Ascending aorta (tissue), 2 donors: ENCODE measurements at regions of chr1 and their contacts with region 1.

Region 1: DNA sequence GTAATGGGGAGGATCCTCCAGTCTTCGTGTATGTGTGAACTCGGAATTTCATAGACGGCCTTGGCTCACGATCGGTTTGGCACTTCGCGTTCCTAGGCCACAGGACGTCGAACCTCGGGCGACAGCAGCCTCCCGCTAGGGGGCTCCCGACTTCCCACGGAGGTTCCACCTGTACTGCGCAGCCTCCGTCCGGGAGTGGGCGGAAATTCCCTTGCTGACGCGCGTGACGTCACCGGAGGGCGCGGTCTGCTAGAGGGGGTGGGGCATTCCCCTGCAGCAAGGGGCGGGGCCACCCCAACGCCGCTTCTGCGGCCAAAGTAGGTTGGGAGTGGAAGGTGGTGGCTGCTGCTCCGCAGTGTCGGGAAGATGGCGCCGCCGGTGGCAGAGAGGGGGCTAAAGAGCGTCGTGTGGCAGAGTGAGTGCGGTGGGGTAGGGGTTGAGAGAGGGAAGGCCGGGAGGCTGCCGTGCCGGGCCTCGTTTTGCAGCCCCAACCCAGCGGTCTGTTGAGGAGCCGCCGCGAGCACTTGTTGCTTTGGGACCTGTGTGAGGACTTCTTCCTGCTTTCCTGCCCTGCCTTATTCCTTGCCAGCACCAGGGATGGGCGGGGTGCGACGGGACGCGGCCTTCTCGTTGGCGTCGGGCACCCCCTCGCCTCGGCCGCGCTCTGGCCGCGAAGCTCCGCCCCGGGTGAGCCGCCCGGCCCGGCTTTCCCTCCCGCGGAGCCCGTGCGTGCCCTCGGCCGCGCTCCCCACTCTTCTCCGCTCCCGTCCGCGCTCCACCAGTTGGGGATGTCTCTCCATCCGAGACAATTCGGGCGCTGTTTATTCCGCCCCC is at the start of gene STXBP3:
- DNase-seq: peak; percentile 92 to 99
- H3K4me3 ChIP-seq: peak within 1 kb of the TSS; percentile 71 to 89
- H3K27ac ChIP-seq: peak within 1 kb of the TSS; percentile 96 to 97
- H3K4me1 ChIP-seq: peaks cover 0 to 8% of the 10 kb centered on the region in 2 donors
- H3K27me3 ChIP-seq: no peaks in the 10 kb centered on the region
- CTCF ChIP-seq: peak; percentile 84 to 97 (median 94)
- total RNA-seq, gene STXBP3: 13.7 TPM

Region 2: DNA sequence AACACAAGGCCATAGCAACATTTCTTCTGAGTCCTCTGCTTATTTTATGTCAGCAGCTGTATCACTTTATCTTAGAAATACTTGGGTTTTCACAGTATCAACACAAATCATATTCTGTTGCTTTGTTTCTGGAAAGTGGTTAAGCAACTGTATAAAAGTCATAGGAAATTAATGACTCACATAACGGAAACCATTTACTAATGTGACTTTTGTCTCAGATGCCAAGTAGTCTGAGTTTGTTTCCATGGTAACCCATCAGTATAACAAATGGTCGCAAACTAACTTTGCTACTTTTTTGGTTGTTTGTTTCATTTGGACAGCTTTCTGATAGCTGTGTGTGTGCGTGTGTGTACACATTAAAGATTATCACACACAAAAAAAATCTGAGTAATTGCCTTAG is 155.6 kb before region 1 on chr1:
- intact Hi-C with region 1: loop called (anchors 2 kb)
- DNase-seq: no peak
- H3K4me3 ChIP-seq: no peak overlapping the region
- H3K27ac ChIP-seq: peak overlapping the region; percentile 72 to 87
- H3K4me1 ChIP-seq: peaks cover 3 to 35% of the 10 kb centered on the region in 2 donors
- H3K27me3 ChIP-seq: no peaks in the 10 kb centered on the region
- CTCF ChIP-seq: no peak

Region 3: GRCh38 chr1:108691942-108692723 is 54.5 kb before region 1 on chr1 and contains the start of gene PRPF38B:
- intact Hi-C with region 1: loop called (anchors 1 kb)
- DNase-seq: peak; percentile 80 to 97
- H3K4me3 ChIP-seq: peak within 1 kb of the TSS; percentile 82 to 98
- H3K27ac ChIP-seq: peak within 1 kb of the TSS; percentile 92 to 99
- H3K4me1 ChIP-seq: peaks cover 0 to 16% of the 10 kb centered on the region in 2 donors
- H3K27me3 ChIP-seq: no peaks in the 10 kb centered on the region
- CTCF ChIP-seq: no peak
- total RNA-seq, gene PRPF38B: 9.0 TPM

Region 4: DNA sequence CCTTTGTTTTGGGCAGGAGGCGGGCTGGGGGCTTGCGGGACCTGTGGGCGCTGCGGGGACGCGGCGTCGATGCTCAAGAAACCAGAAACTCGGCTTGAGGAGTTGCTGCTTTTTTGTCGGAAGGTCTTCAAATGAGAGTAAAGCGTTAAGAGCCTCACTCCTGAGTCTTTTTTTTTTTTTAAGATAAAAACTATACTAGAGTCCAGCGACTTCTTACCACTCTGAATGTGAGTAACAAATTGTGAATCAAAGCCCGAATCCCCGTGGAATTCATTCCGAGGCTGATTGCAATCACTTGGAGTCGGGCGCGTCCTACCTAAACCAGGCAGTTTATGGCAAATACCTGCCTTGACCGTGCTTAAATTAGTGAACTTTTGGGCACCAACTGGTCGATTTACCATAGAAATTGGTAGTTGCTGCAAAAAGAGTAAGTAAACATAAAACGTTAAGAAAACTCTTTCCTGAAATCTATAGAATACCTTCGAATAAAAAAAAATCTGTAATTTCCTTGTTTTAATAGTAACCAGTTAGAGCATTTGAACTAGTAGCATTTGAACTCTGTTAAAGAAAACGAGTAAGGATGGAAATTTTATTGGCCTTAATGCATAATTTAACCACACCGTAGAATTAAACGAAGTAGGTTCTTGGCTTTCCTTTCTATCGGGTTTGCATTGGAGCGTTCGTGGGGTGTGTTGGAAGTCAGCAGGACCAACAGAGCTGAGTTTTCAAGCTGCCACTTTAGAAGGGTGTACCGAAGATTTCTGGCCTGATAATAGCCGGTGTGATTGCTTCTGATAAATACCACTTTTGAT is 131.0 kb after region 1 on chr1:
- intact Hi-C with region 1: loop called (anchors 1 kb)
- DNase-seq: no peak
- H3K4me3 ChIP-seq: peak overlapping the region; percentile 58 to 87
- H3K27ac ChIP-seq: peak overlapping the region; percentile 58 to 64
- H3K4me1 ChIP-seq: peaks cover 0 to 11% of the 10 kb centered on the region in 2 donors
- H3K27me3 ChIP-seq: no peaks in the 10 kb centered on the region
- CTCF ChIP-seq: no peak

Region 5: GRCh38 chr1:108963052-108963686 is 216.6 kb after region 1 on chr1 and contains the start of gene CLCC1:
- intact Hi-C with region 1: loop called (anchors 5 kb)
- DNase-seq: peak; percentile 71 to 96
- H3K4me3 ChIP-seq: peak within 1 kb of the TSS; percentile 76 to 91
- H3K27ac ChIP-seq: peak within 1 kb of the TSS; percentile 93 to 97
- H3K4me1 ChIP-seq: peaks cover 11 to 13% of the 10 kb centered on the region in 2 donors
- H3K27me3 ChIP-seq: no peaks in the 10 kb centered on the region
- CTCF ChIP-seq: no peak
- total RNA-seq, gene CLCC1: 18.1 TPM